WTC11 (cell line): ENCODE measurements at regions of chr10 and their contacts with region 1.

Region 1: DNA sequence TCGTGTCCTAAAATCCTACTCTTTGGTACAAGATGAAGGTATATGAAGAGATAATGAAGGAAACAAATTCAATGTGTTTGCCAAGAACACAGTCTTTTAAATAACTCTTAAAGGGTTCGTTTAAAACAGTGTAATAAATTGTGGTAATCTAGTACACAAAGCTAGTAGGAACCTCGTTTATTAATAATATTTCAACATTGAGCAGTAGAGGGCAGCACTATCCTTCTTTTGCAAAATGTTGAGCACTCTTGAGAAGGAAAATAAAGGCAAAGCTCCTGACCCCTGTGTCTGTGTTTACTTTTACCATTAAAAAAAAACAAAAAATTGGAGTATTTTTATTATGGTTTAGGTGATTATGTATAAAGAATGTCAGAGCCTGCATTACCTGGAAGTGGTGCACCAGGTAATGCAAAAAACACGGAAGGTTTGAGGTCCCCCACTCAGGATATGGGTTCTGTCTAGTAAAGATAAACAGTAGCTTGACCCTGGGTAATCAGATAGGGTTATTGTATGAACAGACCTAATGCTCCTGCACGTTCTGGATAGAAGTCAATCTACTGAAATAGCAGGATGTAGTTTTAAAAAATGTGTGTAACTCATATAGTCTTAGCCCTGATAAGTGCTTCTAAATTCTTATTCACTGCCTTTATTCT is 5.7 kb upstream of the GOT1 start:
- DNase-seq: no peak
- ATAC-seq: peak; percentile 65
- H3K4me3 Mint-ChIP-seq: no peak overlapping the region
- H3K27ac Mint-ChIP-seq: no peak overlapping the region
- H3K4me1 Mint-ChIP-seq: peaks cover 4% of the 10 kb centered on the region
- H3K27me3 Mint-ChIP-seq: no peaks in the 10 kb centered on the region
- CTCF ChIP-seq: peak; percentile 34

Region 2: DNA sequence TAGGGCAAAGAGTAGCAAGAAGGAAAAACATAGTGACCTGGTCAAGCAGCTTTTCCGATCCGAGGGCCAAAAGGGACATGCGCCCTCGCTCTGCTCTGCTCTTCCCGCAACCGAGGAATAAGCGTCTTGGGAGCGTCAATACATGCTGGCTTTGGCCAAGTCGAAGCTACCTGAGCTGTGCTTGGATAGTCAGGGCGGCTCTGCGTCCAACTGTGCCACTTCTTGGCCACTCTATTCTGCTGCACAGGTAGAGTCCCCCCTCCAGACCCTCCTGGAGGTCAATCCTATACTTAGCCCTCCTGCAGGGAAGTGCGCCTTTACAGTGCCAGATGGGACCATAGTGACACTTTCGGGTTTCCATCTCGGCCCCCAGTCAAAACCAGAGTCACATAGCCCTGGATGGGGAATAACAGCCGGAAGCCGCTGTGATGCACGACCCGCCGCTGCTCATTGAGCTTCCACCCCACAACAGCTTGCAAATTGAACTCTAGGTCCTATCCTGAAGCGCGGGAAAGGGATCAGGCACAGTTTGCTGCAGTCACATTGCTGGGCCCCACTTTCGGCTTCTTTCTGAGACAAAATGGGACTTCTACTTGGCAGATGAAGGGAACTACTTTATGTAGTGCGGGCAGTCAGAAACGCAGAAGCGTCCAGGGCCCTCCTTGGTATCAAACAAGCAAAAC is 199.3 kb before region 1 on chr10:
- CTCF ChIA-PET with region 1: no interaction called
- POLR2A ChIA-PET with region 1: no interaction called
- DNase-seq: no peak
- ATAC-seq: peak; percentile 3; the same call in 1 of the 2 replicates
- H3K4me3 Mint-ChIP-seq: peak overlapping the region; percentile 74
- H3K27ac Mint-ChIP-seq: no peak overlapping the region
- H3K4me1 Mint-ChIP-seq: peaks cover 39% of the 10 kb centered on the region
- H3K27me3 Mint-ChIP-seq: peaks cover 83% of the 10 kb centered on the region
- CTCF ChIP-seq: no peak

Region 3: DNA sequence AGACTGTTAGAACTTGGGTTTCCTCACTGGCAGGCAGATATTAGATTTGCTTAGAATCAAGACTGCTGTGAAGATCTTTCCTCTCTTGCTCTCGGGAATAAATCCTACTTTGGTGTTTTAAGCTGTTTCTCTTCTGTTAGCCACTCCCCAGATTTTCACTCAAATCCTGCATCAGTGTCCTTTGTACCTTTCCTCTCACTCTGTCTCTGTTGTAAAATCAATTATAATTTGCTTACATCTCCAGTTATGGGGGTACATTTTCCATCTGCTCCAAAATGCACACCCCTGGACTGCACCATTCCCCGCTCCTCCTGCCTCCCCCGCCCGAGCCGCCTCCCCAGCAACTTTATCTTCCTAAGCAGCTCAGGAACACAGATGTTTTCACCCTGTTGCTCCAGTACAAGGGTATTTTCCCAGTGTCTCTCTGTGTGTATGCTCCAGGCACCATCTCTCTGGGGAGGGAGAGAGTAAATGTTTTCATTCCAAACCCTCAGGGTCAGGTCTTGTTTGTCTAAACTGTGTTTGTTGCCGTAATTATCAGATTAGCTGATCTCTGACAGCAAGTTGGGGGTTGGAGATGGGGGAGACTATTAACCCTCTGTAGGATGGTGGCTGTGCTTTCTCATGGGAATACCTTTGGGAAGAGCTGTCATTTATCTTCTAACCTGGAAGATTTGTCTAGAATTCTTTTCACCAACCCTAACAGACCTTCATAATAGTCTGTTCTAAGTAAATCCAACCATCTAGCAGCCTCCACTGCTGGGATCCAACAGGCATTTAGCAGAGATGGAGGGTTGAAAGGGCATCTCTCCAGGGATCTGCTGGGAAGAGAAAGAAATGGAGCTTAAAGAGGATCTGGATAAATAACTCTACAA is 14.7 kb after region 1 on chr10:
- CTCF ChIA-PET with region 1: interaction called, 20 read pairs
- POLR2A ChIA-PET with region 1: interaction called, 8 read pairs
- DNase-seq: no peak
- ATAC-seq: peak; percentile 44; the same call in 1 of the 2 replicates
- H3K4me3 Mint-ChIP-seq: no peak overlapping the region
- H3K27ac Mint-ChIP-seq: no peak overlapping the region
- H3K4me1 Mint-ChIP-seq: peaks cover 23% of the 10 kb centered on the region
- H3K27me3 Mint-ChIP-seq: no peaks in the 10 kb centered on the region; the same call in 1 of the 2 replicates
- CTCF ChIP-seq: no peak

Region 4: GRCh38 chr10:99484603-99485581 is 48.8 kb after region 1 on chr10:
- CTCF ChIA-PET with region 1: interaction called, 25 read pairs
- POLR2A ChIA-PET with region 1: no interaction called
- DNase-seq: peak; percentile 50
- ATAC-seq: peak; percentile 82
- H3K4me3 Mint-ChIP-seq: no peak overlapping the region
- H3K27ac Mint-ChIP-seq: no peak overlapping the region
- H3K4me1 Mint-ChIP-seq: no peaks in the 10 kb centered on the region
- H3K27me3 Mint-ChIP-seq: peaks cover 22% of the 10 kb centered on the region
- CTCF ChIP-seq: peak; percentile 44; the same call in 1 of the 2 replicates

Region 5: GRCh38 chr10:99520040-99520846 is 84.1 kb after region 1 on chr10:
- CTCF ChIA-PET with region 1: interaction called, 29 read pairs
- POLR2A ChIA-PET with region 1: no interaction called
- DNase-seq: no peak
- ATAC-seq: no peak
- H3K4me3 Mint-ChIP-seq: peak overlapping the region; percentile 57
- H3K27ac Mint-ChIP-seq: no peak overlapping the region
- H3K4me1 Mint-ChIP-seq: peaks cover 49% of the 10 kb centered on the region
- H3K27me3 Mint-ChIP-seq: peaks cover 99% of the 10 kb centered on the region
- CTCF ChIP-seq: no peak

Region 6: GRCh38 chr10:99548041-99548530 is 112.0 kb after region 1 on chr10:
- CTCF ChIA-PET with region 1: interaction called, 13 read pairs
- POLR2A ChIA-PET with region 1: no interaction called
- DNase-seq: peak; percentile 50
- ATAC-seq: peak; percentile 96
- H3K4me3 Mint-ChIP-seq: no peak overlapping the region
- H3K27ac Mint-ChIP-seq: no peak overlapping the region
- H3K4me1 Mint-ChIP-seq: peaks cover 15% of the 10 kb centered on the region
- H3K27me3 Mint-ChIP-seq: peaks cover 71% of the 10 kb centered on the region
- CTCF ChIP-seq: no peak

Region 7: GRCh38 chr10:99612167-99612831 is 176.2 kb after region 1 on chr10:
- CTCF ChIA-PET with region 1: interaction called, 28 read pairs
- POLR2A ChIA-PET with region 1: interaction called, 3 read pairs
- DNase-seq: peak; percentile 23
- ATAC-seq: peak; percentile 87
- H3K4me3 Mint-ChIP-seq: no peak overlapping the region
- H3K27ac Mint-ChIP-seq: no peak overlapping the region
- H3K4me1 Mint-ChIP-seq: peaks cover 6% of the 10 kb centered on the region
- H3K27me3 Mint-ChIP-seq: no peaks in the 10 kb centered on the region
- CTCF ChIP-seq: peak; percentile 73